Endothelial cell of umbilical vein (primary cell): ENCODE measurements at regions of chr4 and their contacts with region 1.

Region 1: GRCh38 chr4:114077610-114078009 is 98.2 kb upstream of the ARSJ start:
- DNase-seq: peak; percentile 92
- H3K4me3 ChIP-seq: no peak overlapping the region
- H3K27ac ChIP-seq: peak overlapping the region; percentile 58
- H3K4me1 ChIP-seq: peaks cover 13% of the 10 kb centered on the region
- H3K27me3 ChIP-seq: no peaks in the 10 kb centered on the region
- CTCF ChIP-seq: no peak
- POLR2A ChIP-seq: no peak

Region 2: GRCh38 chr4:113878668-113879067 is 198.9 kb before region 1 on chr4:
- CTCF ChIA-PET with region 1: interaction called, 3 read pairs
- POLR2A ChIA-PET with region 1: no interaction called
- dilution Hi-C with region 1: no loop called
- intact Hi-C with region 1: loop called (anchors 5 kb)
- DNase-seq: peak; percentile 40
- H3K4me3 ChIP-seq: no peak overlapping the region
- H3K27ac ChIP-seq: no peak overlapping the region
- H3K4me1 ChIP-seq: peaks cover 16% of the 10 kb centered on the region
- H3K27me3 ChIP-seq: no peaks in the 10 kb centered on the region
- CTCF ChIP-seq: peak; percentile 25 to 30
- POLR2A ChIP-seq: no peak

Region 3: GRCh38 chr4:114005569-114006442 is 71.8 kb before region 1 on chr4:
- CTCF ChIA-PET with region 1: no interaction called
- POLR2A ChIA-PET with region 1: no interaction called
- dilution Hi-C with region 1: no loop called
- intact Hi-C with region 1: no loop called
- DNase-seq: peak; percentile 76
- H3K4me3 ChIP-seq: no peak overlapping the region
- H3K27ac ChIP-seq: no peak overlapping the region
- H3K4me1 ChIP-seq: peaks cover 15% of the 10 kb centered on the region
- H3K27me3 ChIP-seq: no peaks in the 10 kb centered on the region
- CTCF ChIP-seq: no peak
- POLR2A ChIP-seq: no peak

Region 4: GRCh38 chr4:114087596-114088230 is 10.1 kb after region 1 on chr4:
- CTCF ChIA-PET with region 1: interaction called, 10 read pairs
- POLR2A ChIA-PET with region 1: no interaction called
- dilution Hi-C with region 1: no loop called
- intact Hi-C with region 1: no loop called
- DNase-seq: peak; percentile 85
- H3K4me3 ChIP-seq: no peak overlapping the region
- H3K27ac ChIP-seq: peak overlapping the region; percentile 34
- H3K4me1 ChIP-seq: peaks cover 10% of the 10 kb centered on the region
- H3K27me3 ChIP-seq: no peaks in the 10 kb centered on the region
- CTCF ChIP-seq: no peak
- POLR2A ChIP-seq: no peak

Region 5: DNA sequence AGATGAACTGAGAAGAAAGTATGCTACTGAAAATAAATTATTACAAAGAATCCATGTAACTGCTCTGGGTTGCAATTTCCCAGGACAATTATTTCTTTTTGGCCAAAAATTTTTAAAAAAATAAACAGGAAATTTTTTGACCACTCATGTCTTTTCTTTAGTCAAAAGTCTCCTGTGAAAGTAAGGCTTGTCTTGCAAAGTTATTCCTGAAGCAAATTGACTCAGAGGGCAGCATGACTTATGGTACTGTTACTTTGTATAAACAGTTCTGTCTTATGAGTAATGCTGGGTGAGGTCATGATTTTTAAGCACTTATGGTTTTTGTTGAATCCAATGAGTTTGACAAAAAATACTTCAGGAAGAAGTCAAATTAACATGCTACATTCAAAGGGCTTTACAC is 194.6 kb after region 1 on chr4:
- CTCF ChIA-PET with region 1: no interaction called
- POLR2A ChIA-PET with region 1: no interaction called
- dilution Hi-C with region 1: no loop called
- intact Hi-C with region 1: loop called (anchors 5 kb)
- DNase-seq: peak; percentile 87
- H3K4me3 ChIP-seq: no peak overlapping the region
- H3K27ac ChIP-seq: peak overlapping the region; percentile 55
- H3K4me1 ChIP-seq: peaks cover 23% of the 10 kb centered on the region
- H3K27me3 ChIP-seq: no peaks in the 10 kb centered on the region
- CTCF ChIP-seq: no peak
- POLR2A ChIP-seq: no peak